T-cell (primary cell): ENCODE measurements at regions of chr14 and their contacts with region 1.

Region 1: GRCh38 chr14:79809849-79810612 is 401.3 kb downstream of the DIO2 start:
- DNase-seq: no peak
- ATAC-seq: no peak
- H3K4me3 ChIP-seq: no peak overlapping the region
- H3K4me3 Mint-ChIP-seq: no peak overlapping the region
- H3K27ac ChIP-seq: no peak overlapping the region
- H3K27ac Mint-ChIP-seq: no peak overlapping the region
- H3K4me1 ChIP-seq: no peaks in the 10 kb centered on the region
- H3K4me1 Mint-ChIP-seq: no peaks in the 10 kb centered on the region
- H3K27me3 ChIP-seq: no peaks in the 10 kb centered on the region
- H3K27me3 Mint-ChIP-seq: no peaks in the 10 kb centered on the region

Region 2: DNA sequence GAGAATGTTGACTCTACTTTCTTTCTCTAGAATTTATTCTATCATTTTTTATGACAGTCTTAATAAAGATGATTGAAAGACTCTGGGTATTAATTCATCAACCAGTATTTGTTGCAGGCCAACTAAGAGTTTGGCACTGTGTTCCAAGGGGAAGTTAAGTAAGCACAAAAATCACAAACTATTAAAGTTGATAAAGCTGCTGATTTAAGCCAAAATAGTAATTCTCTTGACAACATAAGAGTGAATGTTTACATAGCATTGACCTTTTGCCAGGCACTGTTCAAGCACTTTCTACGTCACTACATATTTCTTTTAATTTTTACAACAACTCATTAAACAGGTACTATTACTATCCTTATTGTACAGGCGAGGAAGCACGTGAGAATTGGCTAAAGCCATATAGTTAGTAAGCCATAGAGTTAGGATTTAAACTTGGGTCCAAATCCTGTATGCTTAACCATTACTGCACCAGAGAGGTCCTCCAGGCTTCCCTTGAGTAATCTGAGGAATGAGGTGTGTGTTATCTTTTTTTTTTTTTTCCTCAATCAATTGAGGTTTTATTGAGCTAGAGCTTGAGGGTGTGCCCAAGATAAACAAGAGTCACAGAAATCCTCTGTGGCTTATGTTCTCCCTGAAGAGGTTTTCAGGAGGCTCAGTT is 608.4 kb before region 1 on chr14:
- CTCF ChIA-PET with region 1: no interaction called
- POLR2A ChIA-PET with region 1: interaction called in 1 of 2 experiments, 12 read pairs
- DNase-seq: no peak
- ATAC-seq: no peak
- H3K4me3 ChIP-seq: no peak overlapping the region
- H3K4me3 Mint-ChIP-seq: no peak overlapping the region
- H3K27ac ChIP-seq: no peak overlapping the region
- H3K27ac Mint-ChIP-seq: no peak overlapping the region
- H3K4me1 ChIP-seq: no peaks in the 10 kb centered on the region
- H3K4me1 Mint-ChIP-seq: no peaks in the 10 kb centered on the region
- H3K27me3 ChIP-seq: no peaks in the 10 kb centered on the region
- H3K27me3 Mint-ChIP-seq: no peaks in the 10 kb centered on the region

Region 3: DNA sequence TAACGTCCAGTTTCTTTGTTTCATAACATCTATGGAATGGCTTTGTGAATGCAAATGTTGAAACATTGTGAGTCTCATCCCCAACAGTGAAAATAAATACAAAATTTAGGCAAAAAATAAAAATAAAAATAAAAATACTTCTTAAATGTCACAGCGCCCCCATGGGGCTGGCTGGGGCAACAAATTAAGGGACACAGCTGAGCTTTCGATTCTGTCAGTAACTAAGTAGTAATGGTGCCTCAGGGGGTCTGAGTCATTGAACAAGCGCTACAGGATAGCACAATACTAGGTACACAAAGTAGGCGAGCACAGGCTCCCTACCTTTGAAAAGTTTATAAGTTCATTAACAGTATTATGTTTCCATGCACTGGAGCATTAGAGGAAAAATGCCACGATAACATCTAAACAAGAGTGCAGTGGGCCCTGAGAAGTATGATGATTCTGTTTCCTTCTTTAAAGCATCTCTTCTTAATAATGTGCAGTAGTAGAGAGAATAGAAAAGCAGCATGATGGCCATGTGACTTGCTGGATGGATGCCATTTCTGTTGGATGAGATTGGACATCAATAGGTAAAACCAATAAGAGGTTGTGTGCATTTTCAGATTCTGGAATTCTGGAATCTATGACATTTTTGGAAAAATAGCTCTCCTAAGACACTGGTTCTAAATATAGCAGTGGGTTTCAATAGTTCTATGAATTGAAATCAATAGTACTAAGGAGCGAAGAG is 265.9 kb before region 1 on chr14:
- CTCF ChIA-PET with region 1: no interaction called
- POLR2A ChIA-PET with region 1: no interaction called
- DNase-seq: no peak
- ATAC-seq: no peak
- H3K4me3 ChIP-seq: no peak overlapping the region
- H3K4me3 Mint-ChIP-seq: no peak overlapping the region
- H3K27ac ChIP-seq: no peak overlapping the region
- H3K27ac Mint-ChIP-seq: no peak overlapping the region
- H3K4me1 ChIP-seq: no peaks in the 10 kb centered on the region
- H3K4me1 Mint-ChIP-seq: no peaks in the 10 kb centered on the region
- H3K27me3 ChIP-seq: no peaks in the 10 kb centered on the region
- H3K27me3 Mint-ChIP-seq: peaks cover 0 to 3% of the 10 kb centered on the region in 2 donors

Region 4: GRCh38 chr14:79871136-79871535 is 61.1 kb after region 1 on chr14:
- CTCF ChIA-PET with region 1: no interaction called
- POLR2A ChIA-PET with region 1: no interaction called
- DNase-seq: no peak
- ATAC-seq: no peak
- H3K4me3 ChIP-seq: no peak overlapping the region
- H3K4me3 Mint-ChIP-seq: no peak overlapping the region
- H3K27ac ChIP-seq: no peak overlapping the region
- H3K27ac Mint-ChIP-seq: no peak overlapping the region
- H3K4me1 ChIP-seq: no peaks in the 10 kb centered on the region
- H3K4me1 Mint-ChIP-seq: no peaks in the 10 kb centered on the region
- H3K27me3 ChIP-seq: no peaks in the 10 kb centered on the region
- H3K27me3 Mint-ChIP-seq: no peaks in the 10 kb centered on the region

Region 5: DNA sequence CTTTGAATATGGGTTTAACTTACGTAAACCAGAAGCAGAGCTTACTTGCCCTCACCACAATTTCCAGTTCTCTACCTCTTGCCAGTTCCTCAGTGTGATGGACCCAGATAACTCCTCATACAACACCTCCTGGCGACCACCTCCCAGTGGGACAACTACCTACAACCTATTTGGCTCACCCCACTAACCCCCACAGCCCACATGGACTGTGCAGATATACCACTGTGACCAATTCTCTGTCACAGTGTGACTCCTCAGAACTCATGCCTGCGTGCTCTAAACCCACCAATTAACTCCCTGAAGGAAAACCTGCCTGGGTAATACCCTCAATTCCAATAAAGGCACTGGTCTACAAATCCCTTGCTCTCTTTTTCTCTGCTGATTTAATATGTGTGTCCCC is 89.6 kb after region 1 on chr14:
- CTCF ChIA-PET with region 1: no interaction called
- POLR2A ChIA-PET with region 1: no interaction called
- DNase-seq: no peak
- ATAC-seq: no peak
- H3K4me3 ChIP-seq: no peak overlapping the region
- H3K4me3 Mint-ChIP-seq: no peak overlapping the region
- H3K27ac ChIP-seq: no peak overlapping the region
- H3K27ac Mint-ChIP-seq: no peak overlapping the region
- H3K4me1 ChIP-seq: no peaks in the 10 kb centered on the region
- H3K4me1 Mint-ChIP-seq: no peaks in the 10 kb centered on the region
- H3K27me3 ChIP-seq: no peaks in the 10 kb centered on the region
- H3K27me3 Mint-ChIP-seq: no peaks in the 10 kb centered on the region